ENCODE measurements at regions of chr19 and their contacts with region 1.

Region 1: DNA sequence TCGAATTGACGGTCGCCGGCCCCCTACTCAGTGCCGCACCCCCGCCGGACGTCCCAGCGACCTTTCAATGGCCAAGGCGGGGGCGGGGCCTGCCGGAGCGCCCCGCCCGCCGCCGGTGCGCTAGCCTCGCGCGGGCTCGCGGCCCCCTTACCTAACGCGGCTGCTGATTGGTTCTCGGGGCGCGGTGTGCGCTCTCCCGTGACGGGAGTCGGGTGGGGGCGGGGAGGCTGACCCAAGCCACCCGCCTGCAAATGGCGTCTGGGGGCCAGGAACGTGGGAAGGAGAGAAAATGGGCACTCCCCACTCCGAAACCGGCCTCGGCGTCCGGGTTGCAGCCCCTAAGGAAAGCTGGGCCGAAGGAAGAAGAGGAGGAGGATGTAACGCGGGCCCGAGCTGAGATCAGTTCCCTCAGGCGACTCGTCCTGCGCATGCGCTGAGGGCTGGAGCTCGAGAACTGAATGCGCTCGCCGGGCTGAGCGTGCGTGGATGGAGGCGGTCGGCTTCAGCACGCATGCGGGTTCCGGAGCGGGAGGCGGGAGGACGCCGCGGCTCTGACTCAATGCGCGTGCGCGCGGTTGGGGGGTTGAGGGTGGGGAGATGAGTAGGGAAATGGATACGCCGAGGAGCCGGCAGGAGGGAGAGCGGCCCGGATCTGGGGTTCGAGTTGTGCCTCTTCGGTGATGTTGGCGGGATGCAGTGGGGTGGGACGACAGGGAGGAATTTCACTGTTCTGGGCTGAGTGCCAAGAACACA is at the start of gene SMG9:
- DNase-seq: peak; percentile 99 to 100
- ATAC-seq: peak; percentile 88 to 95 (median 89)
- H3K4me3 ChIP-seq: peak within 1 kb of the TSS; percentile 83
- H3K4me3 Mint-ChIP-seq: peak within 1 kb of the TSS; percentile 99
- H3K27ac ChIP-seq: peak within 1 kb of the TSS; percentile 97
- H3K27ac Mint-ChIP-seq: peak within 1 kb of the TSS; percentile 99 to 100
- H3K4me1 ChIP-seq: peaks cover 25% of the 10 kb centered on the region
- H3K4me1 Mint-ChIP-seq: peaks cover 26 to 36% of the 10 kb centered on the region in 2 donors
- H3K27me3 ChIP-seq: no peaks in the 10 kb centered on the region
- H3K27me3 Mint-ChIP-seq: peaks cover 0 to 2% of the 10 kb centered on the region in 2 donors
- CTCF ChIP-seq: no peak
- total RNA-seq, gene SMG9: 23.3 to 37.4 (median 28.3) TPM

Region 2: GRCh38 chr19:43700395-43701000 is 54.2 kb before region 1 on chr19:
- intact Hi-C with region 1: loop called (anchors 2 kb)
- DNase-seq: peak; percentile 15 to 35
- ATAC-seq: no peak
- H3K4me3 ChIP-seq: no peak overlapping the region
- H3K4me3 Mint-ChIP-seq: peak overlapping the region; percentile 90
- H3K27ac ChIP-seq: peak overlapping the region; percentile 77
- H3K27ac Mint-ChIP-seq: peak overlapping the region; percentile 92 to 98
- H3K4me1 ChIP-seq: peaks cover 27% of the 10 kb centered on the region
- H3K4me1 Mint-ChIP-seq: peaks cover 20 to 22% of the 10 kb centered on the region in 2 donors
- H3K27me3 ChIP-seq: no peaks in the 10 kb centered on the region
- H3K27me3 Mint-ChIP-seq: peaks cover 3 to 10% of the 10 kb centered on the region in 2 donors
- CTCF ChIP-seq: no peak